Activated CD8-positive, alpha-beta T cell treated with anti-CD3 and anti-CD28 coated beads, Interleukin-2, amount 10 ng/mL, durations not matched to agents 7 days and 5 days (primary cell): ENCODE measurements at regions of chr15 and their contacts with region 1.

Region 1: GRCh38 chr15:38453971-38454695 is at the start of gene FAM98B:
- DNase-seq: peak; percentile 89
- ATAC-seq: peak; percentile 92
- H3K4me3 Mint-ChIP-seq: peak within 1 kb of the TSS; percentile 96
- H3K27ac Mint-ChIP-seq: peak within 1 kb of the TSS; percentile 92
- H3K4me1 Mint-ChIP-seq: peaks cover 29% of the 10 kb centered on the region
- H3K27me3 Mint-ChIP-seq: peaks cover 9% of the 10 kb centered on the region
- total RNA-seq, gene FAM98B: 42.8 to 43.9 TPM

Region 2: DNA sequence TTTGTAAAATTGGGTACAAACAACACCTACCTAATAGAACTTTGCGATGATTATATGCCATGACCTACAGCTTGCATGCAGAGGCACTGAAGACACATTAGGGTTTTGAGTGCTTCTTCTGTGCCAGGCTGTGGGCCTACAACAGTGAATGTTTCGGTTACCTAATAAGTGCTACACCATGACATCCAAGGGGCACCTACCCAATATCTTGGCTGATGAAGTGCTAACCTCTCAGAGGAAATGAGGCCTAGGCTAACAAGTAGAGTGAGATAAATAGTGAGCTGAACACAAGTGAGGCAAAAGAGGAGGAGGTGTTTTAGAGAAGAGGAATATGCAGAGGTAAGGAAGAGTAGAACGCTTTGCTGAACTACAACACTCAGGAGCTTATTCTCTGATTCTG is 122.7 kb after region 1 on chr15:
- CTCF ChIA-PET with region 1: no interaction called
- POLR2A ChIA-PET with region 1: no interaction called
- DNase-seq: no peak
- ATAC-seq: peak; percentile 23
- H3K4me3 Mint-ChIP-seq: no peak overlapping the region
- H3K27ac Mint-ChIP-seq: peak overlapping the region; percentile 76
- H3K4me1 Mint-ChIP-seq: peaks cover 25% of the 10 kb centered on the region
- H3K27me3 Mint-ChIP-seq: no peaks in the 10 kb centered on the region

Region 3: GRCh38 chr15:38707802-38708671 is 253.9 kb after region 1 on chr15:
- CTCF ChIA-PET with region 1: interaction called, 18 read pairs
- POLR2A ChIA-PET with region 1: no interaction called
- DNase-seq: peak; percentile 60
- ATAC-seq: peak; percentile 77
- H3K4me3 Mint-ChIP-seq: no peak overlapping the region
- H3K27ac Mint-ChIP-seq: no peak overlapping the region
- H3K4me1 Mint-ChIP-seq: peaks cover 7% of the 10 kb centered on the region
- H3K27me3 Mint-ChIP-seq: peaks cover 15% of the 10 kb centered on the region